Posterior cingulate gyrus (tissue), 11 donors: ENCODE measurements at regions of chr18 and their contacts with region 1.

Region 1: GRCh38 chr18:23416298-23416697 is 36.8 kb upstream of the RIOK3 start:
- DNase-seq: no peak

Region 2: GRCh38 chr18:22800551-22800951 is 615.7 kb before region 1 on chr18:
- intact Hi-C with region 1: loop called (anchors 10 kb)
- DNase-seq: no peak

Region 3: DNA sequence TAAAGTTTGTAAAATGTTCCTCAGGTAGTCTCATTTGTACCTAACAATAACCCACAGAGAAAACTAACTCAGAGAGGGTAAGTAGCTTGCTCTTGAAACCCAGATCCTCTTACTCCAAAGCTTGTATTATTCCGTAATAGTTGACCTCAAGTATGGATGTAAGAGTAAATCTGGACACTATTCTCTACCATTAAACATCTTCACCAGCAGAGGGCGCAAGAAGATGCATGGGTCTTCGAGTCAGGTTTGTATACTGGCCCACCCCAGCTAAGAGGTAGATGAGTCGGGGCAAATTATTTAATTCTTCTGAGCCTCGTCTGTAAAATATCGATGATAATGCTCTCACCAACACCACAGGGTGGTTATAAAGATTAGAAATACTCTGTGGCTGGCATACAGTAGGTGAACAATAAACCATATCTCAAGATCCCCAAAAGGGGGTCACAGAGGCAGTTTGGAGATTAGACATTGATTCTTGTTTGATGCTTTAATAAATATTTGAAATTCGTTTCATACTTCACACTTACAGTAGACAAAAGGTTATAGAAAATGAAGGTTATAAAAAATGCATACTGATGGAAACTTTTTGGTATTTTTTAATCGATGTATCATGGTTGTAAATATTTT is 284.5 kb before region 1 on chr18:
- intact Hi-C with region 1: loop called (anchors 2 kb)
- DNase-seq: peak in 5 of 10 donors; percentile 33 to 84 (median 56)

Region 4: GRCh38 chr18:23307567-23308295 is 108.6 kb before region 1 on chr18:
- intact Hi-C with region 1: no loop called
- DNase-seq: peak in 1 of 10 donors; percentile 66

Region 5: DNA sequence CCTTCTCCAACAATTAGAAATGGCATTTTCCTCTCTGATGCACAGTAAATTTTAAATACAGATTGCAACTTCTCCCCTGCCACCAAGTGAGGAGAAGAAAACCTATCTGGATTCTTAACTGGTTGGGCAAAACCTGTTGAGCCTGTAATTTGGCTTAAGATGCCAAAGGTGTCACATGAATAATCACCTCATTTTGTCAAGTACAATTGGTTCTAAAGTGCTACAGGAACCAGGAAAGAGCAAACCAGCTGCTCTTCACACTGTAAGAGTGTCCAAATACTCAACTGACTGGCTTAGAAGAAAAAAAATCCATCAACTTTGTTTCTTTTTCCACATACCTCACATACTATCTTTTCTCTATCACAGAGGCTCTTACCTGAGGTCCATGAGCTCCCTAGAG is 134.6 kb after region 1 on chr18:
- intact Hi-C with region 1: no loop called
- DNase-seq: no peak